GM10248 (cell line): ENCODE measurements at regions of chr20 and their contacts with region 1.

Region 1: GRCh38 chr20:36886859-36887751 is 11.2 kb downstream of the TLDC2 start:
- DNase-seq: peak; percentile 89
- CTCF ChIP-seq: peak; percentile 93

Region 2: GRCh38 chr20:36613974-36614373 is 273.1 kb before region 1 on chr20:
- CTCF ChIA-PET with region 1: interaction called, 19 read pairs
- POLR2A ChIA-PET with region 1: no interaction called
- DNase-seq: no peak
- CTCF ChIP-seq: no peak

Region 3: DNA sequence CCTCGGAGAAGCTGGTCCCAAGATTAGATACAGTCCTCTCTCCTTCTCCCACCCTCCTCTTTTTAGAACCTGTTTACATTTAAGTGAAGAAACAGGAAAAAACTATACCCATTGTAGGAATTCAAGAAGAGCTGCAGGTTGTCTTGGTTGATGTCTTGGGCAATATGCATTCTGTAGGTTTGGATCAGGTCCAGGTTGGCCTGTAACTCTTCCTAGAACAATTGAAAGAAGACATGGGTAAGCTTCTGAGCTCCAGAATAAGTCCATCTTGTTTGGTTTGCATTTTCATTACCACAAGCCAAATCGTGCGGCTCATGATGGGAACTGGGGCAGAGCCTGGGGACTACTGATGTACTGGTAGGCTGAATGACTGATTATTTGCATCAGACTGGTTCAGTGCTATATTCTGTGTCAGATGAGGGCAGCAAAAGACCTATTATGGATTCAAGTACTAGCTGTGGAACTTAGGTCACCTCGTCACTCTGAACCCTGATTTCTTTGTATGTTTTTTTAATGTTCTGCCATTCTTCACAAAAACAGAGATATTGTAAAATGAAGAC is 220.8 kb before region 1 on chr20:
- CTCF ChIA-PET with region 1: interaction called, 13 read pairs
- POLR2A ChIA-PET with region 1: no interaction called
- DNase-seq: no peak
- CTCF ChIP-seq: peak; percentile 29

Region 4: GRCh38 chr20:36773597-36774390 is 113.3 kb before region 1 on chr20 and contains the start of gene DSN1:
- CTCF ChIA-PET with region 1: interaction called, 11 read pairs
- POLR2A ChIA-PET with region 1: no interaction called
- DNase-seq: peak; percentile 98
- CTCF ChIP-seq: no peak

Region 5: DNA sequence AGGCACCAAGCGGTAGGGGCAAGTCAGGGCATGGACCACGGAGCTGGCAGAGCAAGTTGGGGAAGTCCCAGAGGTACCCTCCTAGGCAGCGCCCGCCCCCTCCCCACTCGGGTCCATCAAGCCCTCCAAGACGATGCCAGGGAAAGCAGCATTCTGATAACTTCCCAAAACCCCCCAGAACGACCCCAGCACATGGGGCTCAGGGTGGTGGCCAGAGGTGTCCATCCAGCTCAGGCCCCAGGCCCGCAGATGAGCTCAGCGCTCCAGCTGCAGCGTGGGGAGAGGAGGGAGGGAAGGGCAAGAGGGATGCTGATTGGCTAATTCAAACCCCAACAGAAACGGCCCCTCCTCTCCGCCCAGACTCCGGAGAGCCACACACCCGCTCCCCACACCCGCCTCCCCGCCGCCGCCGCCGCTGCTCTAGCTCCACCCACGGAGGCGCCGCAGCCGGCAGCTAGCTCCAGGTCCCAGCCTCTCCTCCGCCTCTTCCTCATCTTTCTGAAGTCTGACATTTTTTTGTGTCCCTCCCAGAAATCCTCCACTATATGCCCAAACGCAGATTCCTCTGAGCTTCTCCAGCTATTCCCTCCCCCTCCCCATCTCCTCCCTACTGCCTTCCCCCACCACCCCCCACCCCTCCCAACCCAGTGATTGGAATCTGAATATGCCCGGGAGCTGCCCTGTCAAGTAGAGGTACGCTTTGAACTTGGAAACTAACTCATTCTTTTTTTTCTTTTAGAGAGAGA is 51.5 kb before region 1 on chr20:
- CTCF ChIA-PET with region 1: interaction called, 17 read pairs
- POLR2A ChIA-PET with region 1: no interaction called
- DNase-seq: peak; percentile 97
- CTCF ChIP-seq: no peak

Region 6: GRCh38 chr20:36872852-36873251 is 14.3 kb before region 1 on chr20:
- CTCF ChIA-PET with region 1: interaction called, 31 read pairs
- POLR2A ChIA-PET with region 1: interaction called, 4 read pairs
- DNase-seq: no peak
- CTCF ChIP-seq: no peak

Region 7: DNA sequence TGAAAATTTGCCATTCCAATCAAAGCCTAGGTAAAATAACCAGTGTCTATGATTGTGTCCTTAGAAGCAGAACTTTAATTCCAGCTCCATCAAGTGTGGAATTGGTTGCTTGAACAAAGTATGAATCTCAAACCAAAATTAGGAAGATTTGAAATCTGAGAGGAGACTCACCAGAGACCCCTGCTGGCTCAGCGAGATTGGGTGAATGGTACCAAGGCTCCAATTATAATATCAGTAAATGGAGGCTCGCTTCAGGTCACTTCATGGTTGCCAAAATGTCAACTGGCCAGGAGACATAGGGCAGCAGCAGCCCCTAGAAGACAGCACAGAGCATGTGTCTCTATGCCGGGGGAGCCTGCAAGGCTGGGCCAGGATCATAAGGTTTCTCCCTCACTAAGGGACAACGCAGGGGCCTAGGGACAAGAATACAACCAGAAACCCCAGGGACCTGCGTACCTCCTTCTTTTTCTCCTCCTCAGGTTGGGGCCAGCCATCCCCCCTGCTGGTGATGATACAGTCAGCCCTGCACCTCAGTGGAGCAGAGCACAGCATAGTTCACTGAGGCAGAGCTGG is 194.7 kb after region 1 on chr20:
- CTCF ChIA-PET with region 1: no interaction called
- POLR2A ChIA-PET with region 1: no interaction called
- DNase-seq: peak; percentile 24
- CTCF ChIP-seq: peak; percentile 31